PC-9 (cell line): ENCODE measurements at regions of chr9 and their contacts with region 1.

Region 1: DNA sequence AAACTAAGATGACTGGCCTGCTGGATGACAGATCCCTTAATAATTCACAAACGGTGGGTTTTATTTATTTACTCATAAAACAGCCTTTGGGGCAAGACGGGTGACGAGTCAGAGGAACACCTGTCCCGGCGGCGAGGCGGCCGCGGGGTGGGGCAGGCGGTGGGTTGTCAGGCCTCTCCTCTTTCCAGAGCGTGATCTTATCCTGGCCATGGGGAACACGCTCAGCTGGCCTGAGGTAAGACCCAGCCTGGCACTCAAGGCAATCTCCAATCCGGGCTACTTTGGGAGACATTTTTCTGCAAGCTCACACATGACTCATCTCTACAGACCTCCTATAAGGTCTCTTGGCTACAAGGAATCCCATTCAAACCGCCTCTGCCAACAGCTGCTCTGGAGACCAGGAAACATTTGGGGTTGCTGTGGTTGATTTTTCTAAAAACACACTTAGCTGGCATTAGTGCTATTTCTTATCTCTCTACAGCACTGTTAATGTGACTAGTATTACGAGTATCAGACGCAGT is 6.3 kb downstream of the RAPGEF1 start:
- DNase-seq: peak; percentile 95 to 99
- H3K4me3 ChIP-seq: peak overlapping the region; percentile 27; the same call in 1 of the 2 replicates
- H3K27ac ChIP-seq: peak overlapping the region; percentile 82
- H3K4me1 ChIP-seq: peaks cover 65% of the 10 kb centered on the region
- H3K27me3 ChIP-seq: no peaks in the 10 kb centered on the region
- CTCF ChIP-seq: no peak

Region 2: DNA sequence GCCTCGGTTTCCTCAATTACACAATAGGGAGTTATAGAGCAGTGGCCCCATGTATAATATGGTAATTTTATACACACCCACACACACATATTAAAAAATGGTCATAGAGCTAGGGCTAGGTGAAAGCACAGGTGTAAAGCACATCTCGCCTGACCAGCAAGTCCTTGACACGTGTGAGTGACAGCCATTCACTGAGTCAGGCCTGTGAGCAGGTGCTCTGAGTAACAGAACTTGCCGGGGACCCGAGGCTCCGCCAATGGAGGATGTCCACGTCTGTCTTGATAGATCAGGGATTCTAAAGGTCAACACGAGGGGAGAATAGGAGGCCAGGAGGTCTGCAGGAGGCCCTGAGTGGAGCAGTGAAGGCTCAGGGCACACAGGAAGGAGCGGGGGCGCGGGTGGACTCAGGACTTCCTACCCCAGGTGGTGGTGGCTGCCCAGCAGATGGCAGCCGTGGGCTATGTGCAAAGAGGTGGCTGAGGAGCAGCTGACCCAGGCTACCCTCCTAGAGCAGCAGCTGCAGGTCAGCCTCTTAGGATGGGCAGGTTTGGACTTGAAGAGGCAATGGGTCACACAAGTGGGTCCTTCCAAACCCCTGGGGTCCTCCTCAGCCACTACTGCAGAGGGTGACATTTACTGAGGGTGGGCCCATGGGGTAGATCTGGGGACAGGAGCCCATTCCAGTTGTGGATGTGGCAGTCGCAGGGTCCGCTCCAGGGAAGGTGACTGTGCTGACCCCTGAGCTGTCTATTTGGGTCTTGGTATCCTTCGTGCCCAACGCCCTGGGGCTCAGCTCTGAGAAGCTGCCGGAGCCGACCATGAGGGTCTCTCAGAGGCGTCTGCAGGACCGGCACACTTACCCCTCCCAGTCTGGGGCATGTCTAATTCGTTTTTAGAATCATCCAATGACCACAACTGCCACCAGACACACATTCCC is 142.4 kb before region 1 on chr9:
- CTCF ChIA-PET with region 1: interaction called, 3 read pairs
- POLR2A ChIA-PET with region 1: no interaction called
- intact Hi-C with region 1: loop called (anchors 1 kb)
- DNase-seq: peak; percentile 46 to 83
- H3K4me3 ChIP-seq: no peak overlapping the region
- H3K27ac ChIP-seq: no peak overlapping the region
- H3K4me1 ChIP-seq: peaks cover 10% of the 10 kb centered on the region
- H3K27me3 ChIP-seq: no peaks in the 10 kb centered on the region
- CTCF ChIP-seq: peak; percentile 91

Region 3: GRCh38 chr9:131608493-131609037 is 125.0 kb before region 1 on chr9:
- CTCF ChIA-PET with region 1: no interaction called
- POLR2A ChIA-PET with region 1: interaction called, 12 read pairs
- intact Hi-C with region 1: loop called (anchors 2 kb)
- DNase-seq: peak; percentile 78 to 85
- H3K4me3 ChIP-seq: peak overlapping the region; percentile 34; the same call in 1 of the 2 replicates
- H3K27ac ChIP-seq: peak overlapping the region; percentile 44; the same call in 1 of the 2 replicates
- H3K4me1 ChIP-seq: peaks cover 20% of the 10 kb centered on the region
- H3K27me3 ChIP-seq: no peaks in the 10 kb centered on the region
- CTCF ChIP-seq: no peak

Region 4: GRCh38 chr9:131657890-131658752 is 75.5 kb before region 1 on chr9:
- CTCF ChIA-PET with region 1: no interaction called
- POLR2A ChIA-PET with region 1: interaction called, 8 read pairs
- intact Hi-C with region 1: loop called (anchors 1 kb)
- DNase-seq: peak; percentile 50 to 96
- H3K4me3 ChIP-seq: peak overlapping the region; percentile 27; the same call in 1 of the 2 replicates
- H3K27ac ChIP-seq: peak overlapping the region; percentile 90
- H3K4me1 ChIP-seq: peaks cover 42% of the 10 kb centered on the region
- H3K27me3 ChIP-seq: no peaks in the 10 kb centered on the region
- CTCF ChIP-seq: no peak

Region 5: GRCh38 chr9:131714161-131714646 is 19.4 kb before region 1 on chr9:
- CTCF ChIA-PET with region 1: interaction called, 6 read pairs
- POLR2A ChIA-PET with region 1: interaction called, 5 read pairs
- intact Hi-C with region 1: loop called (anchors 1 kb)
- DNase-seq: peak in 1 of 2 experiments; percentile 51
- H3K4me3 ChIP-seq: no peak overlapping the region
- H3K27ac ChIP-seq: no peak overlapping the region
- H3K4me1 ChIP-seq: no peaks in the 10 kb centered on the region
- H3K27me3 ChIP-seq: no peaks in the 10 kb centered on the region
- CTCF ChIP-seq: no peak

Region 6: GRCh38 chr9:132283863-132284262 is 550.3 kb after region 1 on chr9:
- CTCF ChIA-PET with region 1: interaction called, 10 read pairs
- POLR2A ChIA-PET with region 1: no interaction called
- intact Hi-C with region 1: no loop called
- DNase-seq: no peak
- H3K4me3 ChIP-seq: no peak overlapping the region
- H3K27ac ChIP-seq: no peak overlapping the region
- H3K4me1 ChIP-seq: no peaks in the 10 kb centered on the region
- H3K27me3 ChIP-seq: no peaks in the 10 kb centered on the region
- CTCF ChIP-seq: no peak